HEK293 (cell line): ENCODE measurements at regions of chr14 and their contacts with region 1.

Region 1: GRCh38 chr14:85313560-85314207 is 216.3 kb upstream of the FLRT2 start:
- H3K4me3 ChIP-seq: no peak overlapping the region
- H3K27ac ChIP-seq: no peak overlapping the region
- H3K4me1 ChIP-seq: no peaks in the 10 kb centered on the region
- CTCF ChIP-seq: no peak

Region 2: DNA sequence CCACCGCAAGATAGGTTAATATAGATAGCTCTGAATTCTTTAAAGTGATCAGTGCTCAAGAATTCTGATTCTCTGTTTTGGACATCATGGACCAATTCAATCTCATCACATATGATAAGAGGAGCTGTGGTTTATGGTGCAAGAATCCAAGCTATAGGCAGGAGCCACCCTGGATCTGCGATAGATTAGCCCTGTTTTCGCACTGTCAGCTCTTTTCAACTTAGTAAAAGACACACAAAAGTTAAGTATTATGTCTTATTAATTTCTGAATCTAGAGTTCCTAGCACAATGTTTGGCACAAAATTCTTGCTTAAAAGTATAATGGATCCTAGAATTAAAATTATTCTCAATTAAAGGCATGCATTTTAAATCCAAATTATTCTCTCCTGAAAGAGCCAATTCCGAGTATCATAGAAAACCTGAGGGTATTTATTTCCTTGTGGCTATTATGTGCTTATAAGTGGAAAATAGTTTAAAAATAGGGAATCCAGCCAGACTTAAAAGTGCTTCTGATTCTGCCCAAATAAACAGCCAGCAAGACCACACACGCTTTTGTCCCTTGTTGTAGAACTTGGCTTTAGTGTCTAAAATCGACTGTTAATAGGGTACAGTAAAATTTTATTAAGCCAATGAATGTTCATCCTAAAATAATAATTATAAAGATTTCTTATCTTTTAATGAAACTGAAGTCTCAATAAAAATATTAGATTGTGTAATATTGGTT is 31.3 kb after region 1 on chr14:
- CTCF ChIA-PET with region 1: no interaction called
- POLR2A ChIA-PET with region 1: interaction called, 11 read pairs
- H3K4me3 ChIP-seq: no peak overlapping the region
- H3K27ac ChIP-seq: no peak overlapping the region
- H3K4me1 ChIP-seq: no peaks in the 10 kb centered on the region
- CTCF ChIP-seq: no peak

Region 3: DNA sequence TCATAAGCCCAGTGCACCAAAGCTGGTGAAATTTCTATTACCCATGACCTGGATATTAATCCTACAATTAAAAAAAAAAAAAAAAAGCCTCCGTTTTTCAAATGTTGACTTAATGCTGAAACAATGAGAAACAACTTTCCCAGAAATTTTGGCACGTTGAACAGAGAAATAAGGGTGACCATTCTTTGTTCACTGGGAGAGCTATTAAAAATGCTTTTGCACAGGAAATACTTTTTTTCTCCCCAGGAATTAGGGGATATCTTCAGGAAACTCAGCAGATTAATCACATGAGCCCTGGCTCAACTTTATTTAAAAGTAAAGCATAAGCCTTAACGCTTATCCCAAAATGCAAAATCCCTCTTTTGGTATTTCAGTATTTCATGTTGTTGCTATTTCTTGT is 161.4 kb after region 1 on chr14:
- CTCF ChIA-PET with region 1: no interaction called
- POLR2A ChIA-PET with region 1: no interaction called
- H3K4me3 ChIP-seq: no peak overlapping the region
- H3K27ac ChIP-seq: no peak overlapping the region
- H3K4me1 ChIP-seq: peaks cover 5% of the 10 kb centered on the region; the same call in 1 of the 2 replicates
- CTCF ChIP-seq: no peak